ENCODE measurements at regions of chr1 and their contacts with region 1.

Region 1: GRCh38 chr1:241895013-241895412 is 47.0 kb downstream of the EXO1 start:
- DNase-seq: no peak
- H3K4me3 ChIP-seq: no peak overlapping the region
- H3K27ac ChIP-seq: no peak overlapping the region
- H3K4me1 ChIP-seq: no peaks in the 10 kb centered on the region
- H3K27me3 ChIP-seq: no peaks in the 10 kb centered on the region
- CTCF ChIP-seq: no peak
- EP300 ChIP-seq: no peak
- POLR2A ChIP-seq: no peak
- RAD21 ChIP-seq: no peak

Region 2: DNA sequence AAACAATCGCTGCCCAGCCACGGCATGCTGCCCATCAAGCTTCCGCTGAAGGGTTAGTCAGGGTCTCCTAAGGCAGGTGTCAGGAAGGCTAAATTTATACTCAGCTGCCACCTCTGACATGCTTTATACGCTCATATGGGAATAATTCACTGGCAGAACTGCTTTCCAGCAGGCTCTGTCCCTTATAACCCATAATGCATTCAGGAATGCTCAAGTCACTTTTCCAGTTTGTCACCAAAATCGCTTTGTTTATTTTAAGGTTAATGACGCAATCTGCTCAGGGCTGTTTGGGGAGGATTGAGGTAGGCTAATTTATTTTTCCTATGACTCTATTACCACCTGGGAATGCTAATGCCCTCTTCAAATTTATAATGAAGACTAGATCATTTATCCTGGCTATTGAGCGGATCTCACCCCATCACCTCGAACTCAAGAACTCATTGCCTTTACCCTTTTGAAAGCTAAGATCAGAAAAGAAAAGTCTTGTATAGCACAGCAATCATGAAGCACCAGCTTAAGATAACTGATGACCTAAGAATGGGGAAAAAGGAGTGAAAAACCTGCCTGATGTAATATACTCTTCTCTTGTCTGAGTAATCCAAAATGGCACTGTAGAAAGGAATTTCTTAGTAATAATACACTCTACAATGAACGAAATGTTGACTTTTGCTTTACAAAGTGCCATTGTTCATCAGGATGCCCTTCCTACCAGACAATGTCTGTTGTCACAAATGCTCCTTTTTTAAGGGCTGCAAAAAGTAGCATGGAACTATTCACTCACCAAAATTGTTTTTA is 144.9 kb before region 1 on chr1:
- CTCF ChIA-PET with region 1: no interaction called
- POLR2A ChIA-PET with region 1: no interaction called
- DNase-seq: no peak
- H3K4me3 ChIP-seq: no peak overlapping the region
- H3K27ac ChIP-seq: no peak overlapping the region
- H3K4me1 ChIP-seq: peaks cover 1 to 7% (median 4%) of the 10 kb centered on the region in 4 experiments; a peak in 4 of 7 replicates
- H3K27me3 ChIP-seq: no peaks in the 10 kb centered on the region
- CTCF ChIP-seq: no peak
- EP300 ChIP-seq: no peak
- POLR2A ChIP-seq: no peak
- RAD21 ChIP-seq: no peak

Region 3: GRCh38 chr1:241934201-241934848 is 39.3 kb after region 1 on chr1:
- CTCF ChIA-PET with region 1: interaction called, 11 read pairs
- POLR2A ChIA-PET with region 1: no interaction called
- DNase-seq: peak; percentile 13 to 57
- H3K4me3 ChIP-seq: no peak overlapping the region
- H3K27ac ChIP-seq: no peak overlapping the region
- H3K4me1 ChIP-seq: peaks cover 0 to 4% (median under 1%) of the 10 kb centered on the region in 4 experiments; a peak in 2 of 7 replicates
- H3K27me3 ChIP-seq: no peaks in the 10 kb centered on the region
- CTCF ChIP-seq: no peak
- EP300 ChIP-seq: no peak
- POLR2A ChIP-seq: no peak
- RAD21 ChIP-seq: no peak

Region 4: GRCh38 chr1:241957695-241958494 is 62.9 kb after region 1 on chr1 and contains the start of gene BECN2:
- CTCF ChIA-PET with region 1: interaction called, 14 read pairs
- POLR2A ChIA-PET with region 1: no interaction called
- DNase-seq: no peak
- H3K4me3 ChIP-seq: no peak within 1 kb of the TSS
- H3K27ac ChIP-seq: no peak within 1 kb of the TSS
- H3K4me1 ChIP-seq: no peaks in the 10 kb centered on the region
- H3K27me3 ChIP-seq: no peaks in the 10 kb centered on the region
- CTCF ChIP-seq: peak in 1 of 3 experiments; percentile 2; a peak in 2 of 4 replicates
- EP300 ChIP-seq: no peak
- POLR2A ChIP-seq: no peak
- RAD21 ChIP-seq: peak; percentile 30 to 35
- total RNA-seq, gene BECN2: not detected in 2 replicates

Region 5: DNA sequence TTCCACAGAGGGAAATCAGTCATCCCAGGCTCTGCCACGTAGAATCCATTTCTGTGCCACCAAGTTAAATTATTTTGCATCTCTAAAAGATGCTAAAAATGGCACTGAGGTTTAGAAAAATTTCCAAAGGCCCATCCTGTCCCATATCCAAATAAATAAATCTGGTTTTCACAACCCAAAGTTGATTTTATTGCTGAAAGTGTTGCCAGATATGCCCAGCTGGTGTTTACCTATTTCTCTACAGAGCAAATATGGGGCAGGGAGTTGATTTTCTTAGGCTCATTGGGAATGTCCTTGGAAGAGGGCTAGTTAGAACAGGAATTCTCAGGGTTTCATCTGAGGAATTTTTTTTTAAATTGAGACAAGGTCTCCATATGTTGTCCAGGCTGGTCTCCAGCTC is 84.9 kb after region 1 on chr1:
- CTCF ChIA-PET with region 1: interaction called, 71 read pairs
- POLR2A ChIA-PET with region 1: no interaction called
- DNase-seq: no peak
- H3K4me3 ChIP-seq: no peak overlapping the region
- H3K27ac ChIP-seq: no peak overlapping the region
- H3K4me1 ChIP-seq: no peaks in the 10 kb centered on the region
- H3K27me3 ChIP-seq: no peaks in the 10 kb centered on the region
- CTCF ChIP-seq: no peak
- EP300 ChIP-seq: no peak
- POLR2A ChIP-seq: no peak
- RAD21 ChIP-seq: no peak

Region 6: GRCh38 chr1:242011894-242012660 is 117.1 kb after region 1 on chr1:
- CTCF ChIA-PET with region 1: interaction called, 24 read pairs
- POLR2A ChIA-PET with region 1: no interaction called
- DNase-seq: no peak
- H3K4me3 ChIP-seq: no peak overlapping the region
- H3K27ac ChIP-seq: no peak overlapping the region
- H3K4me1 ChIP-seq: peaks cover 0 to 4% (median under 1%) of the 10 kb centered on the region in 4 experiments; a peak in 2 of 7 replicates
- H3K27me3 ChIP-seq: no peaks in the 10 kb centered on the region; a peak in 1 of 7 replicates
- CTCF ChIP-seq: no peak
- EP300 ChIP-seq: no peak
- POLR2A ChIP-seq: no peak
- RAD21 ChIP-seq: no peak